H1 (cell line): ENCODE measurements at regions of chr10 and their contacts with region 1.

Region 1: DNA sequence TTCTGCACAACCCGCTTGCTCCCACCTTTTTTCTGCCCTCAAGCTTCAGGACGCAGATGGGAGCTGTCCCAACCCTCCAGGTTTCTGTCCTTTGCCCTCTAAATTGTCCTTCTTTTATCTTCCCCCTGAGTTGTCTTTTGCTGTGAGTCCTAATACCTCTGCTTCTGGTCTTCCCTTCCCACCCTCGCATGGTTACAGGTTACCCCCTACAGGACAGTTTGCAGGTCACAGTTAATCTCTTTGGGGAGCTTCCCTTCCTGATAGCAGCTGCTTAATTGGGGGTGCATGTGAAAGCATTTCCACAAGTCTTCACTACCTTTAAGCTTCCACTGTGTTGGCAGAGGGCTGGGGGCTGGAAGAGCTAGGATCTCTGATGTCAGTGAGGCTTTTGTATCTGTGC is 121.5 kb upstream of the CXCL12 start:
- DNase-seq: no peak
- H3K4me3 ChIP-seq: no peak overlapping the region
- H3K27ac ChIP-seq: no peak overlapping the region
- H3K4me1 ChIP-seq: no peaks in the 10 kb centered on the region
- H3K27me3 ChIP-seq: peaks cover 0 to 2% (median 0%) of the 10 kb centered on the region in 4 experiments; a peak in 1 of 7 replicates
- CTCF ChIP-seq: peak; percentile 21 to 43 (median 37); a peak in 3 of 4 replicates
- EP300 ChIP-seq: no peak
- POLR2A ChIP-seq: no peak
- RAD21 ChIP-seq: peak; percentile 66 to 75

Region 2: GRCh38 chr10:44517635-44518034 is 11.2 kb after region 1 on chr10:
- CTCF ChIA-PET with region 1: interaction called, 71 read pairs
- POLR2A ChIA-PET with region 1: interaction called, 3 read pairs
- DNase-seq: peak in 1 of 2 experiments; percentile 66
- H3K4me3 ChIP-seq: no peak overlapping the region
- H3K27ac ChIP-seq: no peak overlapping the region
- H3K4me1 ChIP-seq: no peaks in the 10 kb centered on the region
- H3K27me3 ChIP-seq: no peaks in the 10 kb centered on the region
- CTCF ChIP-seq: peak; percentile 61 to 87 (median 81)
- EP300 ChIP-seq: no peak
- POLR2A ChIP-seq: no peak
- RAD21 ChIP-seq: peak; percentile 60 to 69

Region 3: GRCh38 chr10:44745920-44746319 is 239.5 kb after region 1 on chr10:
- CTCF ChIA-PET with region 1: no interaction called
- POLR2A ChIA-PET with region 1: no interaction called
- DNase-seq: no peak
- H3K4me3 ChIP-seq: no peak overlapping the region
- H3K27ac ChIP-seq: no peak overlapping the region
- H3K4me1 ChIP-seq: no peaks in the 10 kb centered on the region
- H3K27me3 ChIP-seq: no peaks in the 10 kb centered on the region
- CTCF ChIP-seq: no peak
- EP300 ChIP-seq: no peak
- POLR2A ChIP-seq: no peak
- RAD21 ChIP-seq: no peak